ENCODE measurements at regions of chr4 and their contacts with region 1.

Region 1: DNA sequence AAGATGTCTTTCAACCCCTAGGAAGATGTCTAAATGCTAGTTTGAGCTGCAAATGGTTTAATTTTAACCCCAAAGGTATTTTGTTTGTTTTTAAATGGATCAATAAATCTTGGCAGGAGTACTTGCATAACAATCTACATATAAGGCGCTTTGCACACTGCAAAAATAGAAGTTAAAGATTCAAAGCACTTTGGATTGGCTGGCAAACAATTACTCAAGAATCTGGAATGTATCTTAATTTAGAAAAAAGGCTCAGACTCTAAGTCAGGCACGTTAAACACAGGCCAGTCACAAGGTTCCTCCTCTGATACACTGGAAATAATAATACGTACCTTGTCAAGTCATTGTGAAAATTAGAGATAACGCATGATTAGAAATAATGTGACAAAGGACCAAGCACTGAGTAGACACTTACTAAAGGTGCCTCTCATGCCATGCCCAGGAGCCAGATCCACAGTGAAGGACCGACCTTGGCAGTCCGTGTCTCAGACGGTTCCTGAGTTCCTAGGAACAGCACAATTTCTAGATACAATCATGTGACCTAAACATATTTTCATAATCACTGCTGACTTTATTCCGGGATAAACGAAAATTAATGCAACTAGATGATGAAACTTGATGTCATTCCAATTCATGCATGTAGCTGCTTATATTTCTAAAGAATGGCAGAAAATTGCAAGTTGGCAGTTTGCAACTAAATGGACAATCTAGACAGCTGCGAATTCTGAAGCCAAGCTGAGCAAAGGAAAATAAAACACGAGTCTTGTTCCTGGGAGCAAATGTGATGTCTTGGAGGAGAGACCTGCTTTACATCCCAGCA is 49.6 kb downstream of the PROM1 start:
- DNase-seq: no peak
- ATAC-seq: peak; percentile 60
- H3K4me3 ChIP-seq: peak overlapping the region in 1 of 2 donors; percentile 47
- H3K27ac ChIP-seq: peak overlapping the region; percentile 80 to 83
- H3K4me1 ChIP-seq: peaks cover 0 to 4% of the 10 kb centered on the region in 2 donors
- H3K27me3 ChIP-seq: no peaks in the 10 kb centered on the region

Region 2: DNA sequence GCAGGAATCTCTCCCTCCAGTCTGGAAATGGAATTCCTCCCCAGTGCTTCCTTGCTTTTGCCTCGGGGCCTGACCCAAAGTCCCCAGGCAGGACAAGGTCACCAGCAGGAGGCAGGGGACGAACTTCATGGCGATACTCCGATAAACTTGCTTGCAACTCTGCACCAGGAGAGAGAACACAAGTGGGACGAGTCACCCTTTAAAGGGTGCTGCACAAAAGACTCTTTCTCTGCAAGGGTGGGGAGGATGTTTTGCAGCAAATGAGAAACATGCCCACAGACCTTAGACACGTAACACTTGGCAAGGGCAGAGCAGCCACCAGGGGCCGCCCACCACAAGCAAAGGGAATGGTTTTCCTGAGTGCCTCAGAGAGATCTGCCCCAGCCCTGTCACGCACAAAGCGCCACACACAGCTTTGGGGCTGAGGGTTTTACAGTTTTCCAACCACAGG is 71.2 kb before region 1 on chr4 and contains the start of gene FGFBP2:
- intact Hi-C with region 1: no loop called
- DNase-seq: peak in 1 of 2 donors; percentile 53
- ATAC-seq: no peak
- H3K4me3 ChIP-seq: no peak within 1 kb of the TSS
- H3K27ac ChIP-seq: no peak within 1 kb of the TSS
- H3K4me1 ChIP-seq: no peaks in the 10 kb centered on the region
- H3K27me3 ChIP-seq: no peaks in the 10 kb centered on the region
- total RNA-seq, gene FGFBP2: 0.84 to 1.6 TPM

Region 3: DNA sequence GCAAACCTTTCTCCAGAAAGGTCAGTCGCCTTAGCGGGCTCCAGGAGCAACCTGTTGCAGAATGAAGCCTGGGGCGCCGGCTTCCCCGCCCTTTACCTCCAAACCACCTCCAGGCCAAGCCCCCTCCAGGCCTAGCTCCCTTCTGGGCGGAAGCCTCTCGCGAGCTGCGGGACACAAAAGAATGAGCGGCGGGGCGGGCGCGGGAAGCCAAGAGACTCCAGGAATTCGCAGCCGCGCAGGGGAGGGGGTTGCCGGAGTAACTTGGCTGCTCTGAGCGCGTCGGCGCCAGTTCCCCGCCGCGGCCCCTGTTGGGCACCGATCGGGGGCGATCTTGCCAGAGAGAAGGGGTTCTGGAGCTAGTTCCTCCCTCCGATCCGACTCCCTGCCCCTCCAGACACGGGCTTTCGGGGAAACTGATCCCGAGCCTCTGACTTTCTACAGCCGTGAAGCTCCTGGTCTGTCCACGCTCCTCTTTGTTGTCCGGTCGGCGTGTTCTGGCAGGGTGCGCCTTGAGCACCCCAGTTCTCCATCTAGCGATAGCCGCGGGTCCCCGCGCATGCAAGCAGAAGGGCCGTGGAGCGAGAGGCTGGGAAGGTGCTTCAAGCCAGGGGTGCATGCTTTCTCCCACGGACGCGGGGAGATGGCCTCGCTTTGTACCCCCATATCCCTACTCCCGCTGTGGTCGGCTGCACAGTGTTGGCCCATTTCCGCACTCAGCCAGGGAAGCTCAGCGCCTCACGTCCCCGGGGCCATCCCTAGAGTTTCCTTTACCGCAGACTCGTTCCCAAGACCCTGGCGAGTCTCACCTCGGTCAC is 48.4 kb after region 1 on chr4:
- intact Hi-C with region 1: loop called in 1 of 2 experiments (anchors 2 kb)
- DNase-seq: peak; percentile 62 to 81
- ATAC-seq: peak; percentile 70
- H3K4me3 ChIP-seq: peak overlapping the region; percentile 15 to 50
- H3K27ac ChIP-seq: no peak overlapping the region
- H3K4me1 ChIP-seq: no peaks in the 10 kb centered on the region
- H3K27me3 ChIP-seq: peaks cover 0 to 1% of the 10 kb centered on the region in 2 donors

Region 4: DNA sequence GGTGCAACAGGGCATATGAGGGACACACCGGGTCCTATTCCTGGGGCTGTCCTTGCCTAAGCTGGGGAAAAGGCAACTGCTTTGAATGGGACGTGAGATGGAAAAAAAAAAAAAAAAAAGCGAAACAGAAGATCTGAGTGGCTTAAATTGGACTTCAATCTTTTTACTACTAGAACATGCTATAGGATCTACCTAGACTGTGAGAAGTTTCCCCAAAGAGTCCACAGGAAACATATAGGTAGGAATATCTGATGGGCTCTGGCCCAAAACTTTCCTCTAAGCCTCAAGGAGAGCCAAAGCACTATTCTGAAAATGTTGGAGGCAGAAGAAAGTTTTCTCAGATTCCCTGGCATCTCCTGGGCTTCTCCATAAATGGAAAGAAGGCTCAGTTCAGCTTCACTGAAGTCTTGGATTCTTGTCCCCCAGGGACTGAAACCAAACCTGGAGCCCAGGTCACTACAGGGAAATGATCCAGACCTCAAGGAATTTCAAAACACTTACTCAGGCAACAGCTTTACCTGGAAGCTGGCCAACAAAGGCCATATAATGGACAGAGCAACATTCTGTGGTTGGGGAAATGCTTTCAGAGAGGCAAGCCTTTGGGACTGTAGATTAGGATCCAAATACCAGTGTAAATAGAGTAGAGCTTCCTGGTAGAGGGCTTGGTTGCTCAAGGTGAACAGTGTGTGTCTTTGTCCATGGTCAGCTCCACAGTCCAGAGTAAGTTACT is 106.5 kb after region 1 on chr4:
- intact Hi-C with region 1: loop called in 1 of 2 experiments (anchors 5 kb)
- DNase-seq: peak in 1 of 2 donors; percentile 57
- ATAC-seq: peak; percentile 66
- H3K4me3 ChIP-seq: no peak overlapping the region
- H3K27ac ChIP-seq: peak overlapping the region in 1 of 2 donors; percentile 9
- H3K4me1 ChIP-seq: no peaks in the 10 kb centered on the region
- H3K27me3 ChIP-seq: no peaks in the 10 kb centered on the region

Measured in aorta (tissue), 5 donors.